Activated CD8-positive, alpha-beta T cell treated with anti-CD3 and anti-CD28 coated beads for 36 hours (primary cell): ENCODE measurements at regions of chr20 and their contacts with region 1.

Region 1: DNA sequence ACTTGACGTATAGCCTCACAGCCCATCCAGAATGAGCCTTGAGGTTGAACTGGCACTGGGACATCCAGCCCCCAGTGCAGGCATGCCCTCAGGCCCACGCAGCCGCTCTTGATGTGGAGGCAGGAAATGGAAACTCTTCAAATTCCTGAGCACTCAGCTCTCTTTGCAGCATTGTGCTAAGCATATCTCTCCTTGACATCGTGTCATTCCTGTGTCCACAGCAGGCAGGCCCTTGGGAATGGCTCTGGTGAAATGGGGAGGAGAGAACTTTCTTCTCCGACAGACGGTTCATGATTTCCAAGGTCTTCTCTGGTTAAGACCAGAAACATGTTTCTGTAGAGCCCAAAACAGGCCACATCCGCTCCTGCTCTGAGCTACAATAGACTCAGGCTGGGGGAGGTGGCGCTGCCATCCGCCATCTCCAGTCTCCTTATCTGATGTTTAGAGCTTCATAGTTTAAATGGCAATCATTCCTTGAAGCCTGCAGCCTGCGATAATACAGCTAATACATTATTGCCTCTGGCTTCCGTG is 248.8 kb downstream of the CDH4 start:
- DNase-seq: peak; percentile 24
- ATAC-seq: peak; percentile 55
- H3K4me3 Mint-ChIP-seq: no peak overlapping the region
- H3K27ac Mint-ChIP-seq: peak overlapping the region; percentile 79
- H3K4me1 Mint-ChIP-seq: peaks cover 2% of the 10 kb centered on the region
- H3K27me3 Mint-ChIP-seq: no peaks in the 10 kb centered on the region
- CTCF ChIP-seq: no peak

Region 2: GRCh38 chr20:61331551-61331966 is 169.3 kb before region 1 on chr20:
- CTCF ChIA-PET with region 1: no interaction called
- POLR2A ChIA-PET with region 1: no interaction called
- intact Hi-C with region 1: no loop called
- DNase-seq: no peak
- ATAC-seq: no peak
- H3K4me3 Mint-ChIP-seq: no peak overlapping the region
- H3K27ac Mint-ChIP-seq: no peak overlapping the region
- H3K4me1 Mint-ChIP-seq: no peaks in the 10 kb centered on the region
- H3K27me3 Mint-ChIP-seq: no peaks in the 10 kb centered on the region
- CTCF ChIP-seq: no peak

Region 3: GRCh38 chr20:61560361-61560853 is 59.6 kb after region 1 on chr20:
- CTCF ChIA-PET with region 1: no interaction called
- POLR2A ChIA-PET with region 1: no interaction called
- intact Hi-C with region 1: loop called (anchors 10 kb)
- DNase-seq: no peak
- ATAC-seq: no peak
- H3K4me3 Mint-ChIP-seq: no peak overlapping the region
- H3K27ac Mint-ChIP-seq: no peak overlapping the region
- H3K4me1 Mint-ChIP-seq: no peaks in the 10 kb centered on the region
- H3K27me3 Mint-ChIP-seq: no peaks in the 10 kb centered on the region
- CTCF ChIP-seq: no peak